Activated CD4-positive, alpha-beta T cell treated with anti-CD3 and anti-CD28 coated beads for 36 hours (primary cell): ENCODE measurements at regions of chr15 and their contacts with region 1.

Region 1: DNA sequence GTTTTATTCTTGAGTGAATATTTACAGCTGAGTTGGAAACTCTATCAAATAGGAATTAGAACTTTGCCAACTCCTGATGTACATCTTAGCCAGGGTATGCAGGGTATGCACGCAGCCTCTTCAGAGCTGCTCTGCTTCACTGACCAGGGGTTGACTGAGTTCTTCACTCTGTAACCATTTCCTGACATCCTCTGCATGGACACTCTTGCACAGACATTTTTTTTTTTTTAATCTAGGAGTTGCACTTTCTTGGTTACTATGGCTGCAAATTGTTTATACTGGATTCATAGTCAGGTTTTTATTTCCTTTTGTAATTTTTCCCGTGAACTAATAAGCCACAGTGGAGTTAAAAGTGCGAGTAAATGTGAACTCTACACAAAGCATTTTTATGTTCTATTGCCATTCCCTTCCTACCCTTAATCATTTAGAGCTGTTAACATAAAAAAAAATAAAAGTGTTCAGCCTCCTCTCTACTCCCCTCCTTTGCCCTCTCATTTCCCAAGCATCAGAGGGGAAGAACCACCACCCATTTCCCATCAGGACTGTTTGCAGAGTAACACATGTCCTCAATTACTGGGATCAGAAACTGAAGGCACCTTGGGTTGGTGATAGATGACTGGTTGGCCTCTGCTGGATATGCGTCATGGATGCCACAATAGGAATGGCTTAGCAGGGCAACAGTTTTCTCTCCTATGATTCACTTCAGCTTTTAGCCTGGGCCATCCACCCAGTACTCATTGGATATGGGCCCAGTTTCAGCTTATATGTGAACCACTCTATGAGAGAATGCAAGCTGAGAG is 54.0 kb downstream of the DUT start:
- DNase-seq: no peak
- ATAC-seq: no peak
- H3K4me3 Mint-ChIP-seq: no peak overlapping the region
- H3K27ac Mint-ChIP-seq: no peak overlapping the region
- H3K4me1 Mint-ChIP-seq: no peaks in the 10 kb centered on the region
- H3K27me3 Mint-ChIP-seq: peaks cover 3% of the 10 kb centered on the region

Region 2: GRCh38 chr15:48657950-48658591 is 272.8 kb after region 1 on chr15:
- CTCF ChIA-PET with region 1: no interaction called
- POLR2A ChIA-PET with region 1: interaction called, 15 read pairs
- intact Hi-C with region 1: no loop called
- DNase-seq: no peak
- ATAC-seq: no peak
- H3K4me3 Mint-ChIP-seq: no peak overlapping the region
- H3K27ac Mint-ChIP-seq: no peak overlapping the region
- H3K4me1 Mint-ChIP-seq: no peaks in the 10 kb centered on the region
- H3K27me3 Mint-ChIP-seq: peaks cover 5% of the 10 kb centered on the region